ENCODE measurements at regions of chr10 and their contacts with region 1.

Region 1: DNA sequence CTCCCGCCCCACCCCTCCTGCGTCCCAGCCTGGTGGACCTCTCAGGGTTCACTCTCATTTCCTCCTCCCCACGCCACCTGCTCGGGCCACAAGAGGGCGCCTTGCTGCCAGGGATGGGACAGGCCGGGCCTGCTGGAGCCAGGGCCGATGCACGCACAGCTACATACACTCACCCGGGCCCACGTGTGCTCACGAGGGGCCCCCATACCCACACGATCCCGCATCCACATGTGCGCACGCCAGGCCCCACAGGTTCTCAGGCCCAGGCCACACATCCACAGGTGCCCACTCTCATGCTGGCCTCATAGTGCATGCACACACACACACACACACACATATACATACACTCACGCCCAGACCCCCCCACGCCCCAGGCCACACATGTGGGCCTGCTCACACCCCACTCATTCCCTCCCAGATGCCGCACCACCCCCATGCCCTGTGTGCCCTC is 68.6 kb downstream of the LHPP start:
- DNase-seq: peak; percentile 56
- ATAC-seq: peak; percentile 93
- H3K4me3 ChIP-seq: peak overlapping the region in 1 of 3 experiments; percentile 45; a peak in 1 of 6 replicates
- H3K27ac ChIP-seq: no peak overlapping the region
- H3K4me1 ChIP-seq: peaks cover 36% of the 10 kb centered on the region
- H3K27me3 ChIP-seq: no peaks in the 10 kb centered on the region
- CTCF ChIP-seq: peak; percentile 99
- EP300 ChIP-seq: no peak
- POLR2A ChIP-seq: no peak
- RAD21 ChIP-seq: peak; percentile 87

Region 2: DNA sequence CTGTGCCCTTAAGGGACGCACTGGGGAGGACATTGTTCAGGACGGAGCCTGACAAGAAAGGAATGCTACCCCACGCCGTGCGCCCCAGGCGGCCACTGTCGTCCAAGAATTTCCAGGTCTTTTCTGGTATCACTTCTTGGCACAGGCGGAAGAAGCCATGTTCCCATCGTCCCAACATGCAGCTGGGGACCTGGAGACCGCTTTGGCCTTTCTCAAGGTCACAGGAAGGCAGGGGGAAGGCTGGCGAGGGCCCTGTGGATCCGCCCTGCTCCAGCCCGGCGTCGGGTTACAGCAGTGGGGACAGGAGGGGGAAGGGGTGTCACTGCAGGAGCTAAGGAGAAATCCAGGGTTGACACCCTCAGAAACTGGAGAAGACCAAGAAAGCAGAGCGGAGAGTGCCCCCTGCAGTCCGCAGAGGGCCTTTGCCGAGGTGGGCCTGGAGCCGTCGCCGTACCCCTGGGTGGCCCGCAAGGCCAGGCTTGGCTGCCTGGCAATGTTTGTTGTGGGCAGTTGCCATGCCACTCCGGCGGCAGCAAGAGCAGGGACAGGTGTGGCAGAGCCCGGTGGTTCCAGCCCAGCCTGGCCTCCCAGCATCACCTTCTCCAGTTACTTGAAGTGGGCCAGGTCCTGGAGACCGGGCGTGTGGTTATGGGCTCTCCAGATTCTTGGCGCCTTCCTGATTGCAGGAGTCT is 35.5 kb after region 1 on chr10:
- CTCF ChIA-PET with region 1: interaction called, 19 read pairs
- POLR2A ChIA-PET with region 1: no interaction called
- in situ Hi-C with region 1: no loop called
- intact Hi-C with region 1: loop called (anchors 2 kb)
- DNase-seq: peak; percentile 69
- ATAC-seq: peak; percentile 89
- H3K4me3 ChIP-seq: peak overlapping the region in 1 of 3 experiments; percentile 9; a peak in 1 of 6 replicates
- H3K27ac ChIP-seq: no peak overlapping the region
- H3K4me1 ChIP-seq: peaks cover 20% of the 10 kb centered on the region
- H3K27me3 ChIP-seq: peaks cover 0 to 11% of the 10 kb centered on the region in 2 experiments; a peak in 1 of 5 replicates
- CTCF ChIP-seq: peak; percentile 85
- EP300 ChIP-seq: no peak
- POLR2A ChIP-seq: no peak
- RAD21 ChIP-seq: peak; percentile 88